Heart left ventricle (tissue), 16 donors: ENCODE measurements at regions of chr7 and their contacts with region 1.

Region 1: DNA sequence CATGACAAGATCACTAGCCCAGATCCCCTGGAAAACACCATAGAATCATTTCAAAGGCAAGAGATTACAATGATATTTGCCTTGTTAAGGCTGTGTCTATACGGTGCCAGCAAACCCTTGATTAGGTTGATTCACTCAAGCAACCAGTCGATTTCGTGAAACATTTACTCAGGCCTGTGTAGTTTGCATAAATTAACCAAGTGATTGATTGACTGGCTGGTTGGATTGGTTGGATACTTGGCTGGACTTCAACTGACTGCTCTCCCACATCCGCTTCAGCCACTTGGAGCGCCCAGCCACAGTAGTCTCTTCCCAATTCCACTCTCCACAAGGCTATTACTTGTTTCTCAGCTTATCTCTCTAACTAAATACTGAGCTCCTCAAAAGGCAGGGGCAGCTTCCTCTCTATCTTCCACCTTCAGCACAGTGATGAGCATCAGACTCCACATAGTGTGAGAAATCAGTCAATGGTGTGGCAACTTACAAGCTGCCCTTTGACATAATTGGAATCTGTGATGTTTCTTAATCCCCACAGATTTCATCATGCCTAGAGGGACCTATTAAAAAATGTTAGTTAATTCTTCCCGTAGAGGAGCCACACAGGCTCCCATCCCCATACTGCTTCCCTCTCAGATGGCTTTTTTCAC is 217.4 kb downstream of the GRM8 start:
- DNase-seq: no peak
- ATAC-seq: no peak
- H3K4me3 ChIP-seq: no peak overlapping the region
- H3K27ac ChIP-seq: no peak overlapping the region
- H3K4me1 ChIP-seq: no peaks in the 10 kb centered on the region
- H3K27me3 ChIP-seq: no peaks in the 10 kb centered on the region
- CTCF ChIP-seq: no peak
- POLR2A ChIP-seq: no peak

Region 2: DNA sequence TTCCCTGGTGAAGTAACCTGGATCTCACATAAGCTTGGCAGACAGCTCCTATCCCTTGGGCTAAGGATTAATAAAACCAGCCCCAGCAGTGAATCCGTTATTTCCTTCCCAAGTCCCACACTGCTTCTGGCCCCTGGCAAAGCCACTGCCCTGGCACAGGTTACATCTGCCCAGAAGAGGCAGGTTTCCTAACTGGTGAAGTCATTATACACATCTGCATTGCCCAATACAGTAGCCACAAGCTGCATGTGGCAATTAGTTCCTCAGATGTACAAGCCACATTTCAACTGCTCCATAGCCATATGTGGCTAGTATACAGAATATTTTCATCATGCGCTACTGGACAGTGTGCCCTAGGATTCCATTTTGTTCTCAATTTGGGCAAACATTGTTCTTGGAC is 55.6 kb before region 1 on chr7:
- intact Hi-C with region 1: loop called in 1 of 10 experiments (anchors 10 kb)
- DNase-seq: no peak
- ATAC-seq: no peak
- H3K4me3 ChIP-seq: no peak overlapping the region
- H3K27ac ChIP-seq: no peak overlapping the region
- H3K4me1 ChIP-seq: no peaks in the 10 kb centered on the region
- H3K27me3 ChIP-seq: no peaks in the 10 kb centered on the region
- CTCF ChIP-seq: no peak
- POLR2A ChIP-seq: no peak